ENCODE measurements at regions of chr7 and their contacts with region 1.

Region 1: DNA sequence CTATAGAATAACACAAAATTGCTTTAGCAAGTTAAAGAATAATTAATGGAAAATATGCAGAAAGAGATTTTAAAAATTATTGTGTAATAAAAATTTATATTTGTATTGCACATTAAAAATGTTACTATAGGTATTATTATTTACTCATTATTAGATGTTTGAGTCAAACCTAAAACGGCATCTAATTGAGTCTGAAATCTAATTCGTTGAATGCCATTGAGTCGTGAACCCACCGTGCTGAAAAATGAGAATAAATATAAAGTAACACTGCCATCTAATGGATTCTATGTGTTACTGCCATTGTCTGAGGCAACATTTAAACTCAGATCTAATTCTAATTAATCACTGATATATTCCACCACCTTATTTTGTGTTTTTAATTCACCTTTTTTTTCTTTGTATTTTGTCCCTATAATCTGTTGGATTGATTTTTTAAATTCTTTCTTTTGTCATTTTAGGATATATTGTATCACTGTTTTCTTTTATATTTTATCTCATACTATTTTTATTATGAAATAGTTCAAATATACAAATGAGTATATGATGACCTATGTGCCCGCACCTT is 62.2 kb downstream of the SAMD9 start:
- DNase-seq: no peak
- ATAC-seq: peak in 3 of 4 donors; percentile 81 to 85 (median 82)
- H3K4me3 ChIP-seq: no peak overlapping the region
- H3K27ac ChIP-seq: no peak overlapping the region
- H3K4me1 ChIP-seq: no peaks in the 10 kb centered on the region
- H3K27me3 ChIP-seq: no peaks in the 10 kb centered on the region
- CTCF ChIP-seq: peak; percentile 28 to 64 (median 56)

Region 2: DNA sequence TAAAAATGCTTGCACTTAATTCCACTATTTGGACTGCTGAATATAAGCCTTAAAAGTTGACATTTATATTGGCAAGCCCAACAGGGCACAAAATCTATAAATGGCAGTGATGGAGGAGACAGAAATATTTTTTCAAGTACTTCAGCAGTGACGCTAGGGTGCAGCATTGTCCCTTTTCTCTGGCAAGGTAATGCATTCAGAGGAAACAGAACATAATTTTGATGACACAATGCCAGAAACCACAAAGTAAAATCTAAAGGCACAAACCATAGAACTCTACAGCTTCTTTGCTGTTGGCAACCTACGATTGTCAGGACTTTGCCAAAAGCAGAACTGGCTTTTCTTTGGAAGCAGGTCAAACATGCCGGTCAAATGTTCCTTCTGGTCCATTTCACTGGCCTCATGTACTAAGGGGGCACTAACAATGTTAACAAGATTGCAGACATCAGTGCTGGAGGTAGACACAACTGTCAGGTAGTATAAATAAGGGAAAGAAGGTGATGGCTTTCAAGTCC is 434.5 kb before region 1 on chr7:
- intact Hi-C with region 1: loop called in 2 of 3 experiments (anchors 5 to 10 kb)
- DNase-seq: peak in 5 of 6 donors; percentile 50 to 72 (median 64)
- ATAC-seq: peak; percentile 86 to 98 (median 96)
- H3K4me3 ChIP-seq: no peak overlapping the region
- H3K27ac ChIP-seq: peak overlapping the region in 1 of 4 donors; percentile 14
- H3K4me1 ChIP-seq: peaks cover 0 to 6% (median 0%) of the 10 kb centered on the region in 3 donors
- H3K27me3 ChIP-seq: no peaks in the 10 kb centered on the region
- CTCF ChIP-seq: peak; percentile 32 to 65 (median 50)

Region 3: DNA sequence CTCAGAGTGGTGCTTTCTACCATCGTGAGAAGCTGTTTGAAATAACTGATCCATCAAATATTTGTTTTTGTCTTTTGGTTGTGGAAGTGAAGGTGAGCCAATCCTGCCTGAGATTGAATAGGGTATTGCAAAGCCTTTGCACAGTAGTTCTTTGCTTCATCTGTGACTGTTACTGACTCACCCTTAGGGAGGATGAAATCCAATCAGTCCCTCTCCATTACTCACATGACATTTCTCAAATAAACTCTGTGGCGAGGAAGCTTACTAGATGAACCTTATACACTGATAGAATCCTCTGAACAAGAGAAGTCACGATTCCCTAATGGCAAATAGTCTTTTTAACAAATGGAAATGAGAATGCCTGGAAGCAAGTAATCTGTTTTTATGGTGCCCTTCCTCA is 138.8 kb after region 1 on chr7:
- intact Hi-C with region 1: no loop called
- DNase-seq: no peak
- ATAC-seq: peak in 1 of 4 donors; percentile 52
- H3K4me3 ChIP-seq: no peak overlapping the region
- H3K27ac ChIP-seq: no peak overlapping the region
- H3K4me1 ChIP-seq: no peaks in the 10 kb centered on the region
- H3K27me3 ChIP-seq: peaks cover 0 to 7% (median 0%) of the 10 kb centered on the region in 4 donors
- CTCF ChIP-seq: no peak

Measured in pancreas (tissue), 10 donors.